Activated T-helper 2 cell treated with anti-CD3 and anti-CD28 coated beads, Interferon-gamma antibody, Interleukin-2, Interleukin-4, amounts not matched to agents 10 μg/mL and 5 μg/mL and 100 μg/mL, durations not matched to agents 14 hours and 24 hours and 36 hours (primary cell): ENCODE measurements at regions of chr4 and their contacts with region 1.

Region 1: GRCh38 chr4:106502106-106502699 is 133.6 kb upstream of the GIMD1 start:
- DNase-seq: no peak
- H3K4me3 Mint-ChIP-seq: no peak overlapping the region
- H3K27ac Mint-ChIP-seq: no peak overlapping the region
- H3K4me1 Mint-ChIP-seq: peaks cover 4% of the 10 kb centered on the region
- H3K27me3 Mint-ChIP-seq: peaks cover 4% of the 10 kb centered on the region

Region 2: GRCh38 chr4:106266201-106266600 is 236.0 kb before region 1 on chr4:
- intact Hi-C with region 1: loop called (anchors 1 kb)
- DNase-seq: no peak
- H3K4me3 Mint-ChIP-seq: no peak overlapping the region
- H3K27ac Mint-ChIP-seq: no peak overlapping the region
- H3K4me1 Mint-ChIP-seq: peaks cover 2% of the 10 kb centered on the region
- H3K27me3 Mint-ChIP-seq: no peaks in the 10 kb centered on the region

Region 3: DNA sequence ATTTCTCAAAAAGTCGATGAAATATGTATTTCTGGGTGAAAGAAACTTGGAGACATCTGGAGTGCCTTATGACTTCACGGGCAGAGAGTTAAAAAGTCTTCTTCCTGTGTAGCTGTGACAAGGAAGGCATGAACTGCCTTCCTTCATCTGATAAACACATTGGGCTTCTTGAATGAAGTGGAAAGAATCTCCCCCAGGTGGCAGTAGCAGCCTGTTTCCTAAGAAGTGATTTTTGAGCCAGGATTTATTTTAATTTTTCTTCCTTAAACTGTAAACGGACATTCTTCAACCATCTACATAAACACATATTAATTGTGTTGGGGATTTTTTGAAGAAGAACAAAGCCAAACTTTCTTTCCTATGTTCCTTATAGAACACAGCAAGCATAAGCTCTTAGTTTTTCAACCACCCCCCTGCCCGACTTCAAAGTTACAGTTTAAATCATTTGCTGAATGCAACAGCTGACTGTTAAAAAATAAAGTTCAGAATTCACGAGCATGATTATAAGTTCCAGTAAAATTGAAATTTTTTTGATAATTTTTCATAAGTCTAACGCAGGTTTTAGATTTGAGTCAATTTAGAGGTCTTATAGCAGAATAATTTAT is 132.6 kb before region 1 on chr4:
- intact Hi-C with region 1: loop called (anchors 1 kb)
- DNase-seq: no peak
- H3K4me3 Mint-ChIP-seq: no peak overlapping the region
- H3K27ac Mint-ChIP-seq: no peak overlapping the region
- H3K4me1 Mint-ChIP-seq: peaks cover 4% of the 10 kb centered on the region
- H3K27me3 Mint-ChIP-seq: peaks cover 9% of the 10 kb centered on the region

Region 4: DNA sequence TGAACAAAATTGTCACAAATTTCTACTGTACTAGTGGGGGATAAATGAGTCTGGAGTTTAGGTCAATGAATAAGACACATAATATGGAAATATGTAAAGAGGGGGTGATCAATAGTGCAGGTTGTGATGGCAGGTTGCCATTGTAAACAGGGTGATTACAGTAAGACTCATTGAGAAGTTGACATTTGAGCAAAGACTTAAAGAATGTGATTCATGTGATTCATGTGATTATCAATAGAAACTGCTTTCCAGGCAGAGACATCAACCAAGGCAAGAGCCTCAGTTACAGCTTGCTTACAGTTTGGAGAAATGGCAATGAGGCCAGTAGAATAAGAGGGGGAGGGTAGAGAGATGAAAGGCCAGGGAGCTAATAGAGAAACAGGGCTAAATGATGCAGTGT is 87.8 kb before region 1 on chr4:
- intact Hi-C with region 1: no loop called
- DNase-seq: no peak
- H3K4me3 Mint-ChIP-seq: no peak overlapping the region
- H3K27ac Mint-ChIP-seq: no peak overlapping the region
- H3K4me1 Mint-ChIP-seq: no peaks in the 10 kb centered on the region
- H3K27me3 Mint-ChIP-seq: no peaks in the 10 kb centered on the region

Region 5: GRCh38 chr4:106695501-106696262 is 193.5 kb after region 1 on chr4:
- intact Hi-C with region 1: no loop called
- DNase-seq: no peak
- H3K4me3 Mint-ChIP-seq: no peak overlapping the region
- H3K27ac Mint-ChIP-seq: no peak overlapping the region
- H3K4me1 Mint-ChIP-seq: peaks cover under 1% of the 10 kb centered on the region
- H3K27me3 Mint-ChIP-seq: no peaks in the 10 kb centered on the region